PC-9 (cell line): ENCODE measurements at regions of chr6 and their contacts with region 1.

Region 1: GRCh38 chr6:21808045-21808470 is 214.5 kb downstream of the SOX4 start:
- DNase-seq: peak in 1 of 2 experiments; percentile 18
- H3K4me3 ChIP-seq: no peak overlapping the region
- H3K27ac ChIP-seq: no peak overlapping the region
- H3K4me1 ChIP-seq: peaks cover 5% of the 10 kb centered on the region; the same call in 1 of the 2 replicates
- H3K27me3 ChIP-seq: no peaks in the 10 kb centered on the region
- CTCF ChIP-seq: no peak

Region 2: DNA sequence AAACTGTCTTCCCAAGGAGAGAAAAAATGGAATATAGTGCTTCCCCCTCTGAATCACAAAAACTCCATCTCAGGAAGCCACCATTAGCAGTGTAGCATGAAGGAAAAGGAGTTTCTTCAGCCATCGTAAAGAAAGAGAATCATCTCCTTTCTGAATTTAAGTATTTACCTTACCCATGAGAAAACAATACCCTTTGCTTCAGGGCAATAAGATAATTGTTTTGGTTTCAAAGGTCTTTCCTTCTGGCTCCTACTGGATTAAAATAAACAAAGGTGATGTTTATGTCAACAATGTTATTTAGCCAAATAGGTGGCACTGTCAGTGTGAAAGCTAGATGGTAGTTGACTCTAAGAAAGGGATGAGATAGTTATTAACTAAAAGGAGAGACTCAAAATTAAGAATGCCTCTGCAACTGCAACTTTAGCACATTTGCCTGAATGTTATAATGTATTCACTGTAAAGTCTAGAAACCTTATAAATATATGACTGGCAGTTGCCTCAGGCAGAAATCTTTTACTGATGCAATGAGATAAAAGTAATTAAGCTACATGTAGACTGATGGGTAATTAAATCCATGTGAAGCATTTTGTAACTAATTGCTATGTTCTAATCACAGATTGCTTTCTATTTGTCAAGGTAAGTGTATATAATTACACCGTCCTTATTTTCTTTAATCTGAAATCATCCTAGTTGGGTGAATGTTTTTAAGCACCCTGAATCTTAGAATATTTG is 874.8 kb before region 1 on chr6:
- CTCF ChIA-PET with region 1: no interaction called
- POLR2A ChIA-PET with region 1: interaction called, 10 read pairs
- intact Hi-C with region 1: no loop called
- DNase-seq: peak in 1 of 2 experiments; percentile 46
- H3K4me3 ChIP-seq: no peak overlapping the region
- H3K27ac ChIP-seq: no peak overlapping the region
- H3K4me1 ChIP-seq: peaks cover 18% of the 10 kb centered on the region
- H3K27me3 ChIP-seq: no peaks in the 10 kb centered on the region
- CTCF ChIP-seq: no peak

Region 3: GRCh38 chr6:21664314-21665109 is 143.5 kb before region 1 on chr6:
- CTCF ChIA-PET with region 1: no interaction called
- POLR2A ChIA-PET with region 1: no interaction called
- intact Hi-C with region 1: loop called (anchors 10 kb)
- DNase-seq: peak in 1 of 2 experiments; percentile 34
- H3K4me3 ChIP-seq: peak overlapping the region; percentile 52
- H3K27ac ChIP-seq: no peak overlapping the region
- H3K4me1 ChIP-seq: 0 out of 2 replicates have a peak, but pooled peaks cover 10% of the 10 kb centered on the region
- H3K27me3 ChIP-seq: peaks cover 30% of the 10 kb centered on the region
- CTCF ChIP-seq: no peak

Region 4: GRCh38 chr6:21694168-21694567 is 113.9 kb before region 1 on chr6:
- CTCF ChIA-PET with region 1: no interaction called
- POLR2A ChIA-PET with region 1: interaction called, 11 read pairs
- intact Hi-C with region 1: no loop called
- DNase-seq: no peak
- H3K4me3 ChIP-seq: no peak overlapping the region
- H3K27ac ChIP-seq: no peak overlapping the region
- H3K4me1 ChIP-seq: no peaks in the 10 kb centered on the region
- H3K27me3 ChIP-seq: no peaks in the 10 kb centered on the region
- CTCF ChIP-seq: no peak

Region 5: DNA sequence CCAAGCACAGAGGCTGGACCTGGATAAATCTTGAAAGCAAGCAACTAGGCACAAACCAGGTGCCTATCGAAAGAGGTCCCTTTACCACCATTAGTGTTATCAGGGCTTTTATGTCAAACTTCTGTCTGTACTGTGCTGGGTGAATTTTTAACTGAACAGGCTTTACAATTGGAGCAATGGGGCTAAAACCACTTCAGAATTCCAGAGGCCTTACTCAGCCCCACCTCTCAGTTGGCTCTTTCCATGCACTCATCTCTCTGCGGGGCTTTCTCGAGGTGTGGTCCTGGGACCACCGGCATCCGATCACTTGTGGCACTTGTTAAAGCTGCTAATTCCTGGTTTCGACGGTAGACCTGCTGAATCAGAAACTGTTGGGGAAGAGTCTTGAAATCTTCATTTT is 18.0 kb after region 1 on chr6:
- CTCF ChIA-PET with region 1: interaction called, 15 read pairs
- POLR2A ChIA-PET with region 1: no interaction called
- intact Hi-C with region 1: no loop called
- DNase-seq: no peak
- H3K4me3 ChIP-seq: no peak overlapping the region
- H3K27ac ChIP-seq: no peak overlapping the region
- H3K4me1 ChIP-seq: no peaks in the 10 kb centered on the region
- H3K27me3 ChIP-seq: no peaks in the 10 kb centered on the region
- CTCF ChIP-seq: no peak

Region 6: DNA sequence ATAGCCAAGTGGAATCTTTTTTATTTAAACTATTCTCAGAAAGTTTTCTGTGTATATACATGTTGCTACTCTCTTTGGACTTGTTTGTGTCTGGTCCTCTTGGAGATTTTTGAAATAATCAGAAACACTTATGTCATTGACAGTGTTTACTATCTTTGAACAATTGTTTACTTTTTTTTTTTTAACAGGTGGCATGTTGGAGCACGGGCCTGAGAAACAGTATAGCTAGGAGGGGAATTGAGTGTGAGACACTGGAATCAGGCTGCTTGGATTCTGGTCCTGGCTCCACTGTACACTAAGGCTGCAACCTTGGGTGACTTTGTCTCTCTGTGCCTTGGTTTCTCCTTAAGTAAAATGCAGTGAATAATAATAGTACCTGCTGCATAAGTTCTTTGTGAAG is 209.2 kb after region 1 on chr6:
- CTCF ChIA-PET with region 1: no interaction called
- POLR2A ChIA-PET with region 1: no interaction called
- intact Hi-C with region 1: no loop called
- DNase-seq: no peak
- H3K4me3 ChIP-seq: no peak overlapping the region
- H3K27ac ChIP-seq: no peak overlapping the region
- H3K4me1 ChIP-seq: no peaks in the 10 kb centered on the region
- H3K27me3 ChIP-seq: no peaks in the 10 kb centered on the region
- CTCF ChIP-seq: no peak

Region 7: GRCh38 chr6:22043284-22043962 is 235.4 kb after region 1 on chr6:
- CTCF ChIA-PET with region 1: no interaction called
- POLR2A ChIA-PET with region 1: interaction called, 14 read pairs
- intact Hi-C with region 1: no loop called
- DNase-seq: peak in 1 of 2 experiments; percentile 32
- H3K4me3 ChIP-seq: no peak overlapping the region
- H3K27ac ChIP-seq: no peak overlapping the region
- H3K4me1 ChIP-seq: no peaks in the 10 kb centered on the region
- H3K27me3 ChIP-seq: no peaks in the 10 kb centered on the region
- CTCF ChIP-seq: no peak